SK-N-SH (cell line): ENCODE measurements at regions of chr16 and their contacts with region 1.

Region 1: GRCh38 chr16:57422026-57422944 is 17.7 kb downstream of the CCL17 start:
- DNase-seq: peak; percentile 72
- H3K4me3 ChIP-seq: no peak overlapping the region
- H3K27ac ChIP-seq: peak overlapping the region; percentile 17 to 45; a peak in 3 of 4 replicates
- H3K4me1 ChIP-seq: peaks cover 0 to 17% of the 10 kb centered on the region in 2 experiments; a peak in 2 of 4 replicates
- H3K27me3 ChIP-seq: no peaks in the 10 kb centered on the region
- CTCF ChIP-seq: peak; percentile 77
- EP300 ChIP-seq: no peak
- RAD21 ChIP-seq: peak; percentile 86

Region 2: GRCh38 chr16:57316390-57317017 is 105.8 kb before region 1 on chr16:
- CTCF ChIA-PET with region 1: interaction called, 544 read pairs
- POLR2A ChIA-PET with region 1: no interaction called
- DNase-seq: no peak
- H3K4me3 ChIP-seq: no peak overlapping the region
- H3K27ac ChIP-seq: peak overlapping the region in 1 of 2 experiments; percentile 87; a peak in 2 of 4 replicates
- H3K4me1 ChIP-seq: peaks cover 0 to 29% of the 10 kb centered on the region in 2 experiments; a peak in 2 of 4 replicates
- H3K27me3 ChIP-seq: no peaks in the 10 kb centered on the region
- CTCF ChIP-seq: no peak
- EP300 ChIP-seq: peak in 1 of 2 experiments; percentile 46; a peak in 1 of 4 replicates
- RAD21 ChIP-seq: no peak

Region 3: GRCh38 chr16:57432989-57433388 is 10.7 kb after region 1 on chr16:
- CTCF ChIA-PET with region 1: interaction called, 30 read pairs
- POLR2A ChIA-PET with region 1: no interaction called
- DNase-seq: no peak
- H3K4me3 ChIP-seq: no peak overlapping the region
- H3K27ac ChIP-seq: no peak overlapping the region
- H3K4me1 ChIP-seq: no peaks in the 10 kb centered on the region
- H3K27me3 ChIP-seq: no peaks in the 10 kb centered on the region
- CTCF ChIP-seq: no peak
- EP300 ChIP-seq: no peak
- RAD21 ChIP-seq: no peak

Region 4: DNA sequence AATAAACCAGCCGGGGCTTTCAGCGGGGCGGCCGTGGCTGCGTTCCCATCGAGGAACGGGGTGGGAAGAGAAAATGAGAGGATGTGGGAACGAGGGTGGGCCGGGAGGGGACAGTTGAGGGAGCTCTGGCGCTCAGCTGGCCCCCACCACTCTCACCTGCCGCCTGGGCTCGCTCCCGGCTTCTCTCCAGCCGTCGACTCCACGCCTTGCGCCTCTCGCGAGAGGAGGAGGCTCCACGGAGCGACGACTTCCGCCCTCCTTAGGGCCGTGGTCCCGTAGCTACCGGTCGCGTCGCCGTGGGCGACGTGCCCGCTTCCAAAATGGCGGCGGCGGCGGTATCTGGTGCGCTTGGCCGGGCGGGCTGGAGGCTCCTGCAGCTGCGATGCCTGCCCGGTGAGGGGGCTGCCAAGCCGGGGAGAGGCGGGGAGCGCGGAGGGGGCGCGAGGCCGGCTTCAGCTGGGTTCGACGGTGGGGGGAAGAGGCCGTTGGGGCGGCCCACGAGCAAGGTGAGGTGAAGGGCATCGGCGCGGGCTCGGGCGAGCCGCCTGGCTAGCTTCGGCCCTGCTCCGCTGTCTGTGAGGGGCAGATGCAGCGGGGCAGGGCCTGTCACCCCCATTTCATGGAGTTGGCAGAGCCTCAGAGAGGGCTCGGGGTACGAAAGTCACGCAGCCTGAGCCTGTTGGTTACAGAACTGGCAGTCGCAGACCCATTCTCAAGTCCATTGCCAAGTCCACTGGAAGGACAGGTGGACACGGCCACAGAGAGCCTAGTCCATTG is 25.1 kb after region 1 on chr16 and contains the starts of genes CIAPIN1 and COQ9:
- CTCF ChIA-PET with region 1: interaction called, 21 read pairs
- POLR2A ChIA-PET with region 1: interaction called, 3 read pairs
- DNase-seq: peak; percentile 96
- H3K4me3 ChIP-seq: peak within 1 kb of the TSS; percentile 90 to 96
- H3K27ac ChIP-seq: peak within 1 kb of the TSS; percentile 65 to 84; a peak in 3 of 4 replicates
- H3K4me1 ChIP-seq: peaks cover 3 to 9% of the 10 kb centered on the region in 2 experiments; a peak in 2 of 4 replicates
- H3K27me3 ChIP-seq: no peaks in the 10 kb centered on the region
- CTCF ChIP-seq: no peak
- EP300 ChIP-seq: no peak
- RAD21 ChIP-seq: no peak
- polyA plus RNA-seq, gene CIAPIN1: 43.6 and 63.3 TPM in 2 replicates
- polyA plus RNA-seq, gene COQ9: 81.2 and 104 TPM in 2 replicates

Region 5: GRCh38 chr16:57485916-57486857 is 63.9 kb after region 1 on chr16 and contains the start of gene DOK4:
- CTCF ChIA-PET with region 1: interaction called, 22 read pairs
- POLR2A ChIA-PET with region 1: no interaction called
- DNase-seq: peak; percentile 98
- H3K4me3 ChIP-seq: peak within 1 kb of the TSS; percentile 67 to 83
- H3K27ac ChIP-seq: peak within 1 kb of the TSS in 1 of 2 experiments; percentile 94; a peak in 2 of 4 replicates
- H3K4me1 ChIP-seq: peaks cover 0 to 42% of the 10 kb centered on the region in 2 experiments; a peak in 1 of 4 replicates
- H3K27me3 ChIP-seq: no peaks in the 10 kb centered on the region
- CTCF ChIP-seq: no peak
- EP300 ChIP-seq: no peak
- RAD21 ChIP-seq: no peak
- polyA plus RNA-seq, gene DOK4: 28.4 and 36.9 TPM in 2 replicates

Region 6: DNA sequence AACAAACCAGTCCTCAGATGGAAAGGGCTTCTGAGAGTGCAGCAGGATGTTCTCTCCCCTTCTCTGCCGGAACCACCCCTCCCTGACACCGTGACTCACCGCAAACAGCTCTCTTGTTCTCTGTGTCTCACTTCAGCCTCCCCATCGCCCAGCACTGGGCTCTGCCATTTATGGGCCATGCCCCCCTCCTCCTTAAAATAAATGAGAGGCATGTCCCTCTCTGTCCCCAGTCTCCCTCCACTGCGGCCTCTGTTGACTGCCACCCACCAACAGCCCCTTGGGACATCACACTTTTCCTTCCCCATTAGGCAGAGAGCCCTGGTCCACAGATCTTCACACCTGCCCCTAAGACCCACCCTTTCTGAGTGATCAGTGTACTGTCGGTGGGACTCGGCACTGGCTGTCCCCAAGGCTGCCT is 107.8 kb after region 1 on chr16:
- CTCF ChIA-PET with region 1: interaction called, 426 read pairs
- POLR2A ChIA-PET with region 1: interaction called, 3 read pairs
- DNase-seq: peak; percentile 30
- H3K4me3 ChIP-seq: no peak overlapping the region
- H3K27ac ChIP-seq: peak overlapping the region in 1 of 2 experiments; percentile 51; a peak in 1 of 4 replicates
- H3K4me1 ChIP-seq: peaks cover 30 to 33% of the 10 kb centered on the region in 2 experiments; a peak in 3 of 4 replicates
- H3K27me3 ChIP-seq: no peaks in the 10 kb centered on the region
- CTCF ChIP-seq: no peak
- EP300 ChIP-seq: no peak
- RAD21 ChIP-seq: no peak

Region 7: GRCh38 chr16:57700781-57701551 is 278.7 kb after region 1 on chr16:
- CTCF ChIA-PET with region 1: no interaction called
- POLR2A ChIA-PET with region 1: no interaction called
- DNase-seq: no peak
- H3K4me3 ChIP-seq: no peak overlapping the region
- H3K27ac ChIP-seq: no peak overlapping the region
- H3K4me1 ChIP-seq: peaks cover 0 to 5% of the 10 kb centered on the region in 2 experiments; a peak in 1 of 4 replicates
- H3K27me3 ChIP-seq: no peaks in the 10 kb centered on the region
- CTCF ChIP-seq: no peak
- EP300 ChIP-seq: no peak
- RAD21 ChIP-seq: no peak